Natural killer cell (primary cell): ENCODE measurements at regions of chr3 and their contacts with region 1.

Region 1: DNA sequence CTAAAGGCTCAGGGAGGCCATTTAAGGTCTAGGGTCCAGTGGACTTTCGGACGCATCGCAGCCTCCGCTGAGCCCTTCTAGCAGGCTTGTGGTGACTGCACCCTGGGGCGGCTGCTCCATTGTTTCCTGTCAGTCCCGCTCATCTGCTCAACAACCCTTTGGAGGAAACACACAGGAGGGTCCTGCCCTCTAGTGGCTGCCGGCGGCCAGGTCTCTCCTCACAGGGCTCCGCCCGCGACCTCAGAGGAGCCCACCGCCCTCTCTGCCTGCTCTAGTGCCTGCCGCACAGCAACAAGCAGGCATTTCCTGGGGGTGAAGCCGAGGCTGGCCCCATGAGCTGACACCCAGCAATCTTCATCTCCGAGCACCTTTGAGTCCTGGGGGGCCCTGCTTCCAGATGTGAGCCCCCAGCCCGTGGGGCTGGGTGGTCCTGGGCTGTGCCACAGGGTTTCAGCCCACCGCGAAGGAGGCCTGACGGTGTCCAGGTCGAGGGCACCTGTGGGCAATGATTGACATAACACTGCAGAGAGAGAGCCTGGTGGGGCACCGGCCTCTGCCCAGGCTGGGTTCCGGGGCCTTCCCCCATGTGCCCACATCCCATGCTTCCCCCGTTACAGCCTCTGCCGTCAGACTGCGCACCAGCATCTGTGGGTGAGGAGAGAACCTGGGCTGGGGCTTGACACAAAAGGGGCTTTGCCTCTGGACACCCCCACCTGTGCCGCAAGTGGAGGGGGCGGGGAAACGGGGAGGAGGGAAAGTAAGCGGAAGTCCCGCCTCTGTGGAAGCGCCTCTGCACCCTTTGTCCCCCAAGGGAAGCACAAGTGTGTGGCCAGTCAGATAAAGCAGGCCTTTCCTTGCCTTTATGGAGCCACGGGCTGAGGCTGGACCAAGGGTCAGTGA is 27.0 kb upstream of the SFMBT1 start:
- DNase-seq: peak; percentile 77 to 91
- ATAC-seq: peak; percentile 85 to 92 (median 86)
- H3K4me3 ChIP-seq: peak overlapping the region; percentile 81
- H3K4me3 Mint-ChIP-seq: peak overlapping the region; percentile 95
- H3K27ac ChIP-seq: peak overlapping the region; percentile 84
- H3K27ac Mint-ChIP-seq: peak overlapping the region; percentile 92 to 96
- H3K4me1 ChIP-seq: peaks cover 25% of the 10 kb centered on the region
- H3K4me1 Mint-ChIP-seq: peaks cover 14 to 29% of the 10 kb centered on the region in 2 donors
- H3K27me3 ChIP-seq: no peaks in the 10 kb centered on the region
- H3K27me3 Mint-ChIP-seq: peaks cover 0 to 3% of the 10 kb centered on the region in 2 donors
- CTCF ChIP-seq: peak; percentile 95

Region 2: DNA sequence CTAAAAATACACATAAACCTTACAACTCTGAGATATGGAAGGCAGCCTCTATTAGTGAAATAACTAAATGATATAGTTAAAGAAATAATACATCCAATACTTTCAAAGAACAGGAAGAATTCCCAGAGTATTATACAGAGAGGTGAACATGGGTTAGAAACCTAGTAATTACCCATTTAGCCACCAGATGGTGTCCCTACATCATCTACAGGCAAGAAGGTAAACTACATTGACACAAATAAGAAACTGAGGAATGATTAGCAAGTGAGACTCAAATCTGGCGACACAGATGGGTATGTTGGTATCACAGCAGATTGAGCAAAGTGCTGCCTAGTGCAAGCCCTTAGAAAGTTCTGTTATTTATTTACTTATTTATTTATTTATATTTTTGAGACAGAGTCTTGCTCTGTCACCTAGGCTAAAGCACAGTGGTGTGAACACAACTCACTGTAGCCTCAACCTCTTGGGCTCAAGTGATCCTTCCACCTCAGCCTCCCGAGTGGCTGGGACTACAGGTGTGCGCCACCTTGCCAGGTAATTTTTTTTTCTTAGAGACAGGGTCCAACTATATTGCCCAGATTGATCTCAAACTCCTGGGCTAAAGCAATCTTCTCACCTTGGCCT is 330.4 kb before region 1 on chr3:
- intact Hi-C with region 1: loop called (anchors 1 kb)
- DNase-seq: peak in 1 of 2 donors; percentile 62
- ATAC-seq: peak in 1 of 3 donors; percentile 52
- H3K4me3 ChIP-seq: no peak overlapping the region
- H3K4me3 Mint-ChIP-seq: no peak overlapping the region
- H3K27ac ChIP-seq: no peak overlapping the region
- H3K27ac Mint-ChIP-seq: no peak overlapping the region
- H3K4me1 ChIP-seq: no peaks in the 10 kb centered on the region
- H3K4me1 Mint-ChIP-seq: no peaks in the 10 kb centered on the region
- H3K27me3 ChIP-seq: no peaks in the 10 kb centered on the region
- H3K27me3 Mint-ChIP-seq: no peaks in the 10 kb centered on the region
- CTCF ChIP-seq: peak; percentile 49

Region 3: DNA sequence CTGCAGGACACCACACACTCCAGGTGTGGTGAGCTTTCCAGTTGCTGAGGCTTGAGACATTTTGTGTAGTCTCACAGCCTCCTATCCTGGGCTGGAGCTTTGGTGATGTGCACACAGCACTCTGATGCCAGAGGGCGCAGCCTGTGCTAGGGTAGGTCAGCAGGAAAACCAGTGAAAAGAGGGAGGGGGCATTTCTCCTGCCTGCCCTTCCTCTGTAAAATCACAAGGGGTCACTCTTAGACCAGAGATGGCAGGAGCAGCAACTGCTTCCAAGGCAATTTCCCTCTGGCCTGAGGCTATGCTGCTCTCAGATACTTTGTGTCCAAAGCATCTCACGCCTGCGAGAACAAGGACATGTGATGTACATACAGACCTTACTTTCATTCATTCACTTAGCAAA is 221.6 kb before region 1 on chr3:
- intact Hi-C with region 1: loop called (anchors 2 kb)
- DNase-seq: peak in 1 of 2 donors; percentile 49
- ATAC-seq: peak in 2 of 3 donors; percentile 36 to 51
- H3K4me3 ChIP-seq: no peak overlapping the region
- H3K4me3 Mint-ChIP-seq: no peak overlapping the region
- H3K27ac ChIP-seq: no peak overlapping the region
- H3K27ac Mint-ChIP-seq: no peak overlapping the region
- H3K4me1 ChIP-seq: no peaks in the 10 kb centered on the region
- H3K4me1 Mint-ChIP-seq: no peaks in the 10 kb centered on the region
- H3K27me3 ChIP-seq: no peaks in the 10 kb centered on the region
- H3K27me3 Mint-ChIP-seq: no peaks in the 10 kb centered on the region
- CTCF ChIP-seq: no peak